Activated T-helper 1 cell treated with anti-CD3 and anti-CD28 coated beads, Interleukin-12 subunit alpha, Interleukin-12 subunit beta, Interleukin-2, Interleukin-4 antibody, amounts not matched to agents 30 ng/mL and 10 ng/mL and 1 ng/mL, durations not matched to agents 14 hours and 24 hours and 36 hours (primary cell): ENCODE measurements at regions of chr4 and their contacts with region 1.

Region 1: DNA sequence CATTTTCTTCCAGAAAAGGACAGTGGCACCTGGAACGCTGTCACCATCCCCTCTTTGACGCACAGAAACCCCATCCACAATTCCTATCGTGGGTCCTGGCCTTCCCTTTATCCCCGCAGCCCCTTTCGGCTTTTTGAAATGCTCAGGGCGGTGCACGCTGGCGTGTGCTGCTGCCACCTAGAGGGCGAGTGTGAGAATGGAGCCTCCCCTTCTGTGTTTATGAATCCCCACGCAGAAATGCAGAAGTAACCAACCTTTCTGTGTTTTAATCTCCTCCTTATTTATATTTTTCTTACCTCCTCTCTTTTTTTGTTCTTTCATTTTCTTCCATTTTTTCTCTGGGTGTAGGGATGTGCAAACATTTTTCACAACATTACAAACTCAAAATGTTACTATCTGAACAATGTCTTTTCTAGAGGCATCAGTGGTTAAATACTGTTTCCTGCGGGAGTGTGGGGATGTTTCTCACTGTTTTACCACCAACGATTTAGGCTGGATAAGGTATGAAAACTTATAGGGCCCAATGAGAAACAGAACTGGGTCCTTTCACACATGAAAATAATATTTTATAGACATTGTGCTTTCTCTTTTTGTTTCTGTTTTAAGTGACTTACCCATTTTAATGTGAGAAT is 50.0 kb downstream of the TMA16 start:
- DNase-seq: peak; percentile 26
- H3K4me3 Mint-ChIP-seq: no peak overlapping the region
- H3K27ac Mint-ChIP-seq: no peak overlapping the region
- H3K4me1 Mint-ChIP-seq: no peaks in the 10 kb centered on the region
- H3K27me3 Mint-ChIP-seq: no peaks in the 10 kb centered on the region

Region 2: GRCh38 chr4:163048447-163048846 is 496.1 kb before region 1 on chr4:
- intact Hi-C with region 1: loop called (anchors 1 kb)
- DNase-seq: no peak
- H3K4me3 Mint-ChIP-seq: no peak overlapping the region
- H3K27ac Mint-ChIP-seq: no peak overlapping the region
- H3K4me1 Mint-ChIP-seq: no peaks in the 10 kb centered on the region
- H3K27me3 Mint-ChIP-seq: no peaks in the 10 kb centered on the region

Region 3: GRCh38 chr4:163166041-163166579 is 378.4 kb before region 1 on chr4:
- intact Hi-C with region 1: loop called (anchors 2 kb)
- DNase-seq: peak; percentile 40
- H3K4me3 Mint-ChIP-seq: peak overlapping the region; percentile 89
- H3K27ac Mint-ChIP-seq: peak overlapping the region; percentile 97
- H3K4me1 Mint-ChIP-seq: peaks cover 46% of the 10 kb centered on the region
- H3K27me3 Mint-ChIP-seq: no peaks in the 10 kb centered on the region

Region 4: GRCh38 chr4:163484906-163485305 is 59.6 kb before region 1 on chr4:
- intact Hi-C with region 1: loop called (anchors 1 kb)
- DNase-seq: peak; percentile 25
- H3K4me3 Mint-ChIP-seq: no peak overlapping the region
- H3K27ac Mint-ChIP-seq: no peak overlapping the region
- H3K4me1 Mint-ChIP-seq: peaks cover 9% of the 10 kb centered on the region
- H3K27me3 Mint-ChIP-seq: peaks cover 14% of the 10 kb centered on the region

Region 5: GRCh38 chr4:163527172-163527571 is 17.4 kb before region 1 on chr4:
- intact Hi-C with region 1: loop called (anchors 2 kb)
- DNase-seq: no peak
- H3K4me3 Mint-ChIP-seq: no peak overlapping the region
- H3K27ac Mint-ChIP-seq: no peak overlapping the region
- H3K4me1 Mint-ChIP-seq: no peaks in the 10 kb centered on the region
- H3K27me3 Mint-ChIP-seq: no peaks in the 10 kb centered on the region